Heart left ventricle (tissue), 16 donors: ENCODE measurements at regions of chr10 and their contacts with region 1.

Region 1: GRCh38 chr10:101441541-101442455 is 87.8 kb downstream of the BTRC start:
- DNase-seq: peak in 2 of 5 donors; percentile 10 to 25
- ATAC-seq: peak; percentile 65 to 89 (median 86)
- H3K4me3 ChIP-seq: no peak overlapping the region
- H3K27ac ChIP-seq: no peak overlapping the region
- H3K4me1 ChIP-seq: peaks cover 0 to 29% (median 8%) of the 10 kb centered on the region in 12 donors
- H3K27me3 ChIP-seq: no peaks in the 10 kb centered on the region
- CTCF ChIP-seq: peak; percentile 30 to 68 (median 55)
- POLR2A ChIP-seq: no peak

Region 2: DNA sequence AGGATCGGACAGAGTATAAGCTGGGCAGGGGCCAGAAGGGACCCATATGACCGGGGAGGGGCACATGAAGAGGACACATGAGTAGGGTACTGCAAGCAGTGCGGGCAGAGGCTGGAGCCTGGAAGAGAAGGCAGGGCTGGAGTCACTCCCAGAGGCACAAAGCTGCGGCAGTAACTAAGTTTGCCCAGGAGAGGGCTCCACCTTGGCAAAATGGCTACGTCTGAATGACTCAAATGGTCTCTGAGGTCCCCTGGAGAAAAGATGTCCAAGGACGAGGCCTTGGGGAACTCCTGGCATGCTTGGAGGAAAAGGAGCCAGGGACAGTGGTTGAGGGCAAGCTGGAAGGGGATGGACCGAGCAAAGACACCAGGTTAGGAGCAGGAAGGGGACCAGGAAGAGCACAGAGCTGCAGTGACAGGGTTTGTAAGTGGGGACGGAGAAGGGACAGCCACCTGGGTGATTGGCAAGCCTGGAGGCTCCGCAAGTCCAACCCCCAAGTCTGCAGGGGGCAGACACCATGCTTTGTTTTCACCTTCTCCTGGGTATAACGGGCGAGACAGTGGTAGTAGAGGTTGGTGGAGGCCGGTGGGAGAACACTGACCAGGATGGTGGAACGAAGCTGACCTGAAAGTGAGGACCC is 169.4 kb before region 1 on chr10:
- intact Hi-C with region 1: loop called in 1 of 10 experiments (anchors 1 kb)
- DNase-seq: peak in 4 of 5 donors; percentile 29 to 50 (median 48)
- ATAC-seq: peak; percentile 64 to 87 (median 80)
- H3K4me3 ChIP-seq: no peak overlapping the region
- H3K27ac ChIP-seq: no peak overlapping the region
- H3K4me1 ChIP-seq: no peaks in the 10 kb centered on the region
- H3K27me3 ChIP-seq: peaks cover 0 to 25% (median 4%) of the 10 kb centered on the region in 9 donors
- CTCF ChIP-seq: peak; percentile 61 to 78 (median 72)
- POLR2A ChIP-seq: no peak

Region 3: DNA sequence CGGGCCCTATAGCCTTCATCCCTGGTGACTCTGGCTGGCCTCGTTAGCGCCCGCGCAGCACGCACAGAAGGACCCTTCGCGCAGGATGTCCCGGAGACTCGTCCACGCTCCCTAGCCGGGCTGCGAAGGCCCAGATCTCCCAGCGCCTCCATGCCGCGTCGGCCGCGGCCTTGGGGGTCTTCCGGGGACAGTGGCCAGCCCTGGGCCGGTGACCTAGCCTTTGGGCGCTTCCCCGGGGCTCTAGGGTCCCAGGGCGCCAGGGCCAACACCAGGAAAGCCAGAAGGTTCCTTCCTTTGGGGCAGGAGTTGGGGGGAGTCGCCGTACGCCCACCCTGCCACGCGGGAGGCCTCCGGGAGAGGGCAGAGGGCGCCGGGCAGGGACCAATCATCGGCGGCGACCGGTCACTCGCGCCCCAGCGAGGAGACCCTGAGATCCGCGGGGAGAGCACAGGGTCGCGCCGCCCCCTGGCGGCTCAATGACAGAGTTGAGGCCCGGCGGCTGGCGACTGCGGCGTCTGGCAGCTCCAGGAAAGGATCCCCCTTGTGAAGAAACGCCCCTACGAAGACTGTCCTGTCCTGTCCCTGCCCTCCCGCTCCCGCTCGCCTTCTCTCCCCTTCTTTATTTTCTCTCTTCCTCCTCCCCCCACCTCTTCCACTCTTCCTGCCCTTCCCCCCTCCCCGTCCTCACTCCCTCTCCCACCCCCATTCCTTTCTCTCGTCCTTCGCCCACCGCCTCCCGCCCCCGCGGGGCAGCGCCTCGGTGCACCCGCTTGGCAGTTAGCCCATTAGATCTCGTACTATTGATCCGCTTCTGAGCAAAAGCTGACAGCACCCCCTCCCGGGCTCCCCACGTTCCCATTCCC is 150.2 kb before region 1 on chr10:
- intact Hi-C with region 1: loop called in 3 of 10 experiments (anchors 5 kb)
- DNase-seq: peak; percentile 50 to 78 (median 70)
- ATAC-seq: peak in 3 of 4 donors; percentile 66 to 85 (median 77)
- H3K4me3 ChIP-seq: peak overlapping the region; percentile 46 to 84 (median 62)
- H3K27ac ChIP-seq: peak overlapping the region in 9 of 12 donors; percentile 44 to 78 (median 63)
- H3K4me1 ChIP-seq: peaks cover 0 to 25% (median 8%) of the 10 kb centered on the region in 12 donors
- H3K27me3 ChIP-seq: peaks cover 5 to 80% (median 24%) of the 10 kb centered on the region in 9 donors
- CTCF ChIP-seq: peak; percentile 49 to 75 (median 64)
- POLR2A ChIP-seq: no peak

Region 4: DNA sequence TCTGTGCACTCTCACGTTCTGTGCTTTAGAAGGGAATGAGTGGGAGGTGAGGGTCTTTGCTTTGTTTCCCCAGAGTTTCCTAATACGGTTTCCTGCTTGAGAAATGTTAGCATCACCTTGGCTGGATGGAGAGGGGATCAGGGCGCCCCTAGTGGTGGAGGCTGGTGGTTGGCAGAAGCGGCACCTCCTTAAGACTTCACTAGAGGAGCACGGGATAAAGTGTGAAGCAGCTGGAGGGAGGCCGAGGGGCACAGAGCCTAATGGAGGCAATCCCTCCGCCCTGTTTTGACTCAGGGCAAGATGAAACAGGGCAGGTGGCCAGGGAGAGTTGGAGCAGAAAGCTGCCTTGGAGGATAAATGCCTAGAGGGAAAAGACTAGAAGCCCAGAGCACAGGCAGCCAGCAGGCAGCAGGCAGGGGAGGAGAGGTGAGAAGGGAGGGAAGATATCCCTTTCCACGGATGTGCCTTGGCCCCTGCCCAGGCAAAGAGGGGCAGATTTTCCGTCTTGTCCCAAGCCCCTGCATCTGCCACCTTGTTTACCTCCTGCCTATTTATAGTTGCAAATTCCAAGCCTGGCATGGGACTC is 143.8 kb before region 1 on chr10:
- intact Hi-C with region 1: loop called in 9 of 10 experiments (anchors 5 to 10 kb)
- DNase-seq: peak in 4 of 5 donors; percentile 25 to 75 (median 33)
- ATAC-seq: peak in 3 of 4 donors; percentile 25 to 48 (median 37)
- H3K4me3 ChIP-seq: no peak overlapping the region
- H3K27ac ChIP-seq: no peak overlapping the region
- H3K4me1 ChIP-seq: peaks cover 0 to 11% (median 0%) of the 10 kb centered on the region in 12 donors
- H3K27me3 ChIP-seq: peaks cover 0 to 38% (median 3%) of the 10 kb centered on the region in 9 donors
- CTCF ChIP-seq: peak; percentile 66 to 89 (median 76)
- POLR2A ChIP-seq: no peak

Region 5: GRCh38 chr10:101353692-101354327 is 88.0 kb before region 1 on chr10 and contains the start of gene BTRC:
- intact Hi-C with region 1: loop called in 5 of 10 experiments (anchors 2 to 10 kb)
- DNase-seq: peak; percentile 96 to 98 (median 97)
- ATAC-seq: peak; percentile 98 to 99 (median 98)
- H3K4me3 ChIP-seq: peak within 1 kb of the TSS; percentile 55 to 98 (median 94)
- H3K27ac ChIP-seq: peak within 1 kb of the TSS; percentile 45 to 96 (median 91)
- H3K4me1 ChIP-seq: peaks cover 0 to 42% (median 19%) of the 10 kb centered on the region in 12 donors
- H3K27me3 ChIP-seq: peaks cover 0 to 1% (median 0%) of the 10 kb centered on the region in 9 donors
- CTCF ChIP-seq: no peak
- POLR2A ChIP-seq: peak in 1 of 2 donors; percentile 91
- total RNA-seq, gene BTRC: 21.2 to 53.5 (median 35.0) TPM